ENCODE measurements at regions of chr6 and their contacts with region 1.

Region 1: DNA sequence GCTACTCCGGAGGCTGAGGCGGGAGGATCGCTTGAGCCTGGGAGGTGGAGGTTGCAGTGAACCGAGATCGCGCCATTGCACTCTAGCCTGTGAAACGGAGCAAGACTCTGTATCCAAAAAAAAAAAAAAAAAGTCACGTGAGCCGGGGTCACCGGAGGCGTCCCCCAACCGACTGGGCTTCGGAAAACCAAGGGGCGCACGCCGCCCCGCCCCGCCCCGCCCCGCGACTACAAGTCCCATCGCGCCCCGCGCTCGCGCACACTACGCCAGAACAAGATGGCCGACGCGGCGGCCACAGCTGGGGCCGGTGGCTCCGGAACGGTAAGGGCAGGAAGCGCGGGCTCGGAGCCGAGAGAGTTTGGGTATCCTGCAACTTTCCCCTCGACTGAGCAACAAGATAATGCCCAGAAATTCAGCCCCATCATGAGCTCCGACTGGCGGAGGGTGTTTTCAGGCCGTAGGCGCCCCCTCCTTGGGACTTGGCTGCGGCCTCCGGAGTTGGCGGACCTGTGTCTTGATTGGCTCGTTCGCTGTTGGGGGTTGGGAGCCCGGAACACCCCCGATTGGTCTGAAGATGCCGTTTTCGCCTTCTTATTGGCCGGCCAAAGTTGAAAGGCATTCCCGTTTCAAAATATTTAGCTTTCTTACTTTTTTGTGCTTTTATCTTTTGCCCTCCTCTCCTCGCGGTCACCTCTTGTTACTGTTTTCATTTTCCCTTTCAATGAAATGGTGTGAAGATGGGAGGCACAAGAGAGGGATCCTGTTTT is at the start of gene TAF8:
- DNase-seq: peak; percentile 94
- ATAC-seq: peak; percentile 89
- total RNA-seq, gene TAF8: 28.6 TPM

Region 2: DNA sequence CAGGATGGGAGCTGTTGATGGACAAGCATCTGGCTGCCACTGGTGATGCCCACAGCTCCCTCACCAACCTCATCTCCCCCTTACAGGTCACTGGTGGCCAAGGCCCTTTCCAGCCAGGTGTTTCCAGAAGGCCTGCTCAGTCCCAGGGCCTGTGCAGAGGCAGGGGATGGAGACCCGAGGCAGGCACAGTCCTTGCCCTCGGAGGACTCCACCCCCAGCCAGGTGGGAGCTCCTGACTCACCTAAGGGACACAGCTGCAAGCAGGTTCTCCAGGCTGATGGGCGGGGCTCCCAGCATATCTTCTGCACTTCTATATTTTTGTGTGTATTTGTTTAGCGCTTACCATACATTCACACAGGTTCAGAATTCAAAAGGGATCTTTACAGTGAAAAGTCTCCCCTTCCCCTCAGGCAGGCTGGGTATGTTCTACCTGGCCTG is 654.5 kb after region 1 on chr6:
- intact Hi-C with region 1: loop called (anchors 5 kb)
- DNase-seq: no peak
- ATAC-seq: no peak